ENCODE measurements at regions of chr20 and their contacts with region 1.

Region 1: GRCh38 chr20:63567386-63568169 is 6.5 kb downstream of the HELZ2 start:
- DNase-seq: peak; percentile 74
- ATAC-seq: peak; percentile 65
- H3K4me3 Mint-ChIP-seq: peak overlapping the region; percentile 64
- H3K27ac Mint-ChIP-seq: peak overlapping the region; percentile 78
- H3K4me1 Mint-ChIP-seq: peaks cover 13% of the 10 kb centered on the region
- H3K27me3 Mint-ChIP-seq: no peaks in the 10 kb centered on the region

Region 2: GRCh38 chr20:63537525-63538203 is 29.9 kb before region 1 on chr20:
- POLR2A ChIA-PET with region 1: interaction called, 10 read pairs
- DNase-seq: peak; percentile 96
- ATAC-seq: peak; percentile 96
- H3K4me3 Mint-ChIP-seq: peak overlapping the region; percentile 76
- H3K27ac Mint-ChIP-seq: peak overlapping the region; percentile 93
- H3K4me1 Mint-ChIP-seq: no peaks in the 10 kb centered on the region
- H3K27me3 Mint-ChIP-seq: no peaks in the 10 kb centered on the region

Region 3: DNA sequence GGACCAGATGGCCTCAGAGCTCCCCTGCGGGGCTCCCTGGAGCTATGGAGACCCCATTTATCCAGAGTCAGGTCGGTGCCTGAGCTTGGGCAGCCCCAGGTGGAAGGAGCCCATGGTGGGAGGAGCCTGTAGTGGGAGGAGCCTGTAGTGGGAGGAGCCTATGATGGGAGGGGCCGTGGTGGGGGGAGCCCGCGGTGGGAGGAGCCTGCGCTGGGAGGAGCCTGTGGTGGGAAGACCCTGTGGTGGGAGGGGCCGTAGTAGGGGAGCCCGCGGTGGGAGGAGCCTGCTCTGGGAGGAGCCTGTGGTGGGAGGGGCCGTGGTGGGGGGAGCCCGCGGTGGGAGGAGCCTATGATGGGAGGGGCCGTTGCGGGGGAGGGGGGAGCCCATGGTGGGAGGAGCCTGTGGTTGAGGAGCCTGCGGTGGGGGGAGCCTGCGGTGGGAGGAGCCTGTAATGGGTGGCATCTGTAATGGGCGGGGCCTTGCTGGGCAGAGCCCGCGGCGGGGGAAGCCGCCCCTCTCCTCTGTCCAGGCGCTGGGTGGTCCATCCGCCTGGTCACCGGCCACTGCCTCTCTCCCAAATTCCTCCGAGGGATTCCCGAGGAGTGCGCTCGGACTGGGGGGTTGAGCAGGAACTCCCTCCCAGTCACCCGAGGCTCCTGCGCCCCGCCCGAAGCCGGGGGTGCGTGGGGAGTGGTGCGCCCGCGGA is 14.2 kb before region 1 on chr20:
- POLR2A ChIA-PET with region 1: interaction called, 31 read pairs
- DNase-seq: peak; percentile 92
- ATAC-seq: peak; percentile 69
- H3K4me3 Mint-ChIP-seq: peak overlapping the region; percentile 78
- H3K27ac Mint-ChIP-seq: peak overlapping the region; percentile 91
- H3K4me1 Mint-ChIP-seq: peaks cover 7% of the 10 kb centered on the region
- H3K27me3 Mint-ChIP-seq: peaks cover 21% of the 10 kb centered on the region